Heart left ventricle (tissue), 16 donors: ENCODE measurements at regions of chr16 and their contacts with region 1.

Region 1: GRCh38 chr16:11535471-11535870 is 51.2 kb downstream of the LITAF start:
- DNase-seq: no peak
- ATAC-seq: no peak
- H3K4me3 ChIP-seq: no peak overlapping the region
- H3K27ac ChIP-seq: no peak overlapping the region
- H3K4me1 ChIP-seq: peaks cover 0 to 8% (median 0%) of the 10 kb centered on the region in 12 donors
- H3K27me3 ChIP-seq: no peaks in the 10 kb centered on the region
- CTCF ChIP-seq: no peak
- POLR2A ChIP-seq: no peak

Region 2: DNA sequence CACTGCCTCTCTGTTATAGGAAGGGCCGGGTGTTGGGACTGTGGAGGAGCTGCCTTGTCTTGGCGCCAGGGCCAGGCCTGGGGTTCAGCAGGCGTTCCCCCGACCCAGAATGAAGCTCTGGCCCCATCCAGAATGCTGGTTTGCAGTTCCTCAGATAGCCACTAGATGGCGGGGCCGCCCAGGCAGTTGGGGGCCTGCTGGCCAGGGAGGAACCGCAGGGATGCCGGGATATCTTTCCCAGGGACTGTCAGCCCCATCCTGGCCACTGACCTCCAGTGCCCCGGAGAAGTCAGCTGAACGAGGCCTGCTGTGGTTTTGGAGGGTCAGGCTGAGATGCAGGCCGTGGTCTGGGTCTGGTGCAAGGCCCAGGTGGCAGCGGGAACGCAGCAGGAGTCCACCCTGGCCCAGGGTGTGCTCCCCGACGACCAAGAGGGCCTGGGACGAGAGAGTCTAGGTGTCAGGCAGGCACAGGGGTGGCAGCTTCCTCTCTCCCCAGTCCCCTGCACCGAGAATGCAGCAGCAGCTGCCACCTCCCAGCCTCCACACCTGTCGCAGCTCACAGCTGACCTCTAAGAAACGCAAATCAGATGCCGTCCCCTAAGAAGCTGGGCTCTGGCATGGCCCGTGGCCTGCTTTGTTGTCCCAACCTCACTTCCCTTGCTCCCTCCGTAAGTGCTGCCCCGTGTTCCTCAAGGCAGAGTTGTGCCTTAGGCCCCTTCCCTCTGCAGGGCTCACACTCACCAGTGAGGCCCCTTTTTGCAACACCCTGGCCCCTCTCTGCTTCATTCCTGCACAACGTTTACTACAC is 139.0 kb before region 1 on chr16:
- intact Hi-C with region 1: loop called in 1 of 10 experiments (anchors 5 kb)
- DNase-seq: peak; percentile 71 to 83 (median 76)
- ATAC-seq: peak; percentile 63 to 84 (median 84)
- H3K4me3 ChIP-seq: no peak overlapping the region
- H3K27ac ChIP-seq: peak overlapping the region in 3 of 12 donors; percentile 25 to 54 (median 30)
- H3K4me1 ChIP-seq: peaks cover 0 to 7% (median 2%) of the 10 kb centered on the region in 12 donors
- H3K27me3 ChIP-seq: peaks cover 0 to 3% (median 0%) of the 10 kb centered on the region in 9 donors
- CTCF ChIP-seq: peak; percentile 96 to 100 (median 98)
- POLR2A ChIP-seq: no peak

Region 3: DNA sequence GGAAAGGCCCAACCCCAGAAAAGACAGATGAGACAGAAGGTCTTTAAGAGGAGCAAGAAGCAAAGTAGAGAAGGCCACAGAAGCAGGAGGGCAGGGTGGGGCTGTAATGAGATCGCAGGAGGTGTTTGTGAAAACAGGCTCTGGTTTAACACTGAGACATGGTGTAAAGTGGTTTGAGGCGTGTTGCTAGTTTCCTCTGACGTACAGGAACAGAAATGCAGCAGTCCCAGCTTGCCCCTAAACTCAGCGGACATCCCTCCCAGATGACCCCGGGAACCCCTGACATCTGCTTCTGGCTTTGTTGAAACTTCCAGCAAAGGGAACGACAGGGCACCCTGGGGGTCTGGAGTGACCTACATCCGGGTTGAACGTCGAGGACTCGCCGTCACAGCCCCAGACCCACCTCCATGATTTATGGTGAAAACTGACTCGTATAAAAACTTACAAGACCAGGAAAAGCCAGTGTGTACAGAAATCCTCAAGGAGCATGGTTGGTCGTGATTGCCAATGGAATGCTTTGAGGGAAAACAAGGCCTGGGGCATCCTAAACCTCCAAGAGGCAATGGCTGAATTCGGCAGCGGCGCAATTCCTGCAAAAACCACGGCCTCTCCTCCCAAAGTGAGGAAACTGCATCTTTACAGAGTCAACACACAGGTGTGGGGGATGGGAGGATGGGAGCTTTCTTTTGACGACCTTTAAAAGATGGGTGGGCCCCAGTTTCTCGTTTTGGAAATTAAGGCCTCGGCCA is 25.4 kb after region 1 on chr16:
- intact Hi-C with region 1: no loop called
- DNase-seq: peak in 2 of 5 donors; percentile 28 to 45
- ATAC-seq: peak in 3 of 4 donors; percentile 41 to 84 (median 61)
- H3K4me3 ChIP-seq: peak overlapping the region in 1 of 12 donors; percentile 37
- H3K27ac ChIP-seq: peak overlapping the region in 11 of 12 donors; percentile 8 to 79 (median 53)
- H3K4me1 ChIP-seq: peaks cover 0 to 67% (median 17%) of the 10 kb centered on the region in 12 donors
- H3K27me3 ChIP-seq: no peaks in the 10 kb centered on the region
- CTCF ChIP-seq: no peak
- POLR2A ChIP-seq: no peak

Region 4: GRCh38 chr16:11621920-11622651 is 86.6 kb after region 1 on chr16:
- intact Hi-C with region 1: loop called in 1 of 10 experiments (anchors 10 kb)
- DNase-seq: peak in 1 of 5 donors; percentile 48
- ATAC-seq: peak in 3 of 4 donors; percentile 51 to 60 (median 59)
- H3K4me3 ChIP-seq: peak overlapping the region in 9 of 12 donors; percentile 0 to 42 (median 18)
- H3K27ac ChIP-seq: peak overlapping the region in 7 of 12 donors; percentile 13 to 85 (median 58)
- H3K4me1 ChIP-seq: peaks cover 0 to 76% (median 1%) of the 10 kb centered on the region in 12 donors
- H3K27me3 ChIP-seq: no peaks in the 10 kb centered on the region
- CTCF ChIP-seq: no peak
- POLR2A ChIP-seq: no peak

Region 5: DNA sequence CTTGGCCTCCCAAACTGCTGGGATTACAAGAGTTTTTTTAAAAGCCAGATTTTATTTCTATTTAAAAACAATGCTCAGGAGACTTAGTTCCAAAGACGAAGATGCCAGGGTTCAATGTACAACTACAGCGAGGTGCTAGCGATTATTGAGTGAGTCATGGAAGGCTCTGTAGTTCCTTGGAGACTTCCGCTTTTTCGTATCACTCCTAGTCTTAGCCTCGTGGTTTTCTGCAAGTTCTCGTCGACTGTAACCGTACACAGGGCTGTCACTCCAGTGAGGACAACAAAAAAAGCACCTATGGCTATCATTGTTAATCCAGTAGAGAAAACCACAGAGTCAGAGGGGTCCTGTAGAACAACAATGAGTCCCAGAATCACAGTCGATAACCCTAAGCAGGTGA is 284.3 kb after region 1 on chr16:
- intact Hi-C with region 1: loop called in 6 of 10 experiments (anchors 10 kb)
- DNase-seq: no peak
- ATAC-seq: no peak
- H3K4me3 ChIP-seq: no peak overlapping the region
- H3K27ac ChIP-seq: no peak overlapping the region
- H3K4me1 ChIP-seq: peaks cover 0 to 19% (median 5%) of the 10 kb centered on the region in 12 donors
- H3K27me3 ChIP-seq: no peaks in the 10 kb centered on the region
- CTCF ChIP-seq: no peak
- POLR2A ChIP-seq: no peak